ENCODE measurements at regions of chr1 and their contacts with region 1.

Region 1: DNA sequence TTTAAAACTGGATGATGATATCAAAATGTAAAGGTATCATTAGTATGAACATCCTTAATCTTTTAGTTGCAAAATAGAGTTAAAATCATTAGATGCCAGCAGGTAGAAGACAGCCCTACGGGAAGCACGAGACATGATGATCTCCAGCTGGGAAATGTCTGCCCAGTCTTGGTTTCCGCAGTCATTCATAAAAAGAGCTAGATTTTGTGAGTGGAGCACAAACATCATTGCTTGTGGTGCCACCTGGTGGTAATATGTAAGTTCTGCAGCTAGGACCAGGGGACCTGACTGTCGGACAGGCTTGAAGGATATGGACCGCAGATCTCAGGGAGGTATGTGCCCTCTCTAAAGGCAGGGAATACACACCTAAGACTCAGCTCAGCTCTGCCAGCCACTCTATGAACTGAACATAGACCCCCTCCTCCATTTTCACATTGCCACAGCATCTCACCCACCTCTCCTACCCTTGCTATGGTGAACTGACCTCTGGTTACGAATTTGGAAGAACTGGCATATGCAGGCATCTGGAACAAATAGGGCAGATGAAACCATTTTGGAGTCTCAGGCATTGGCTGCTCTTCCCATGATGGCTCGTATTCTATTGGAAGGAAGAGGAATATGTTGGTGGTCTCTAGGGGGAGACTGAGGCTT is 9.2 kb downstream of the FCMR start:
- DNase-seq: no peak
- H3K4me3 ChIP-seq: no peak overlapping the region
- H3K27ac ChIP-seq: no peak overlapping the region
- H3K4me1 ChIP-seq: peaks cover 16% of the 10 kb centered on the region
- H3K27me3 ChIP-seq: no peaks in the 10 kb centered on the region
- CTCF ChIP-seq: peak; percentile 75 to 88 (median 79)
- POLR2A ChIP-seq: no peak

Region 2: GRCh38 chr1:206635080-206635977 is 277.2 kb before region 1 on chr1 and contains the start of gene DYRK3:
- intact Hi-C with region 1: loop called (anchors 10 kb)
- DNase-seq: peak in 1 of 2 donors; percentile 96
- H3K4me3 ChIP-seq: peak within 1 kb of the TSS; percentile 79 to 91
- H3K27ac ChIP-seq: peak within 1 kb of the TSS; percentile 90
- H3K4me1 ChIP-seq: peaks cover 32% of the 10 kb centered on the region
- H3K27me3 ChIP-seq: no peaks in the 10 kb centered on the region
- CTCF ChIP-seq: peak in 1 of 3 experiments; percentile 32
- POLR2A ChIP-seq: peak in 1 of 2 donors; percentile 11
- total RNA-seq, gene DYRK3: 5.9 TPM

Region 3: GRCh38 chr1:206734499-206735142 is 177.9 kb before region 1 on chr1:
- intact Hi-C with region 1: loop called (anchors 5 kb)
- DNase-seq: no peak
- H3K4me3 ChIP-seq: no peak overlapping the region
- H3K27ac ChIP-seq: no peak overlapping the region
- H3K4me1 ChIP-seq: peaks cover 18% of the 10 kb centered on the region
- H3K27me3 ChIP-seq: no peaks in the 10 kb centered on the region
- CTCF ChIP-seq: peak in 2 of 3 experiments; percentile 22 to 69
- POLR2A ChIP-seq: no peak

Measured in vagina (tissue), 2 donors.